Aorta (tissue), 5 donors: ENCODE measurements at regions of chr14 and their contacts with region 1.

Region 1: DNA sequence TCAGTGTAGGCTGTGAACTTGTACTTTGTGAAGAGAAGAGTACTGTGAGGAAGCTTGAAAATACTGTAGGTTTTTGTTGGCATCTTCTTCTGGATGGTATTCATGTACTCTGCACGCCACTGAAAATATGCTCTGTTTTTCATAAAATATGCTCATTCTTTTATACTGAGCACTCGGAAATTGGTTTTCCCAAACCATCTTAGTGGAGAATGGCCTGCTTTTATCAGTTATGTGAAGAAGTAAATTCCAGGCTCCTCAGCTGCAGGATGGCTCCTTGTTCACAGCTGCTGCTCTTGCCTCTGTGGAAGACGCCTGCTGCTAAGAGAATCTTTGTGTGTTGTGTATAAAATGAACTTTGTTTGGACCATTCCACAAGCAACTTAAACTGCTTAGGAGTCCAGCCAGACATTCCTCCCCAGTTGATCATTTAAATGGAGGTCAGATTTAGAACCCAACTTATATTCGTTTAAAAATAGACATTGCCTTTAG is 443.5 kb upstream of the RGS6 start:
- DNase-seq: no peak
- ATAC-seq: no peak
- H3K4me3 ChIP-seq: no peak overlapping the region
- H3K27ac ChIP-seq: peak overlapping the region; percentile 67 to 82
- H3K4me1 ChIP-seq: peaks cover 0 to 9% of the 10 kb centered on the region in 2 donors
- H3K27me3 ChIP-seq: no peaks in the 10 kb centered on the region

Region 2: GRCh38 chr14:71448431-71449252 is 40.1 kb before region 1 on chr14:
- intact Hi-C with region 1: loop called in 1 of 2 experiments (anchors 5 kb)
- DNase-seq: no peak
- ATAC-seq: no peak
- H3K4me3 ChIP-seq: no peak overlapping the region
- H3K27ac ChIP-seq: no peak overlapping the region
- H3K4me1 ChIP-seq: peaks cover 0 to 3% of the 10 kb centered on the region in 2 donors
- H3K27me3 ChIP-seq: no peaks in the 10 kb centered on the region

Region 3: DNA sequence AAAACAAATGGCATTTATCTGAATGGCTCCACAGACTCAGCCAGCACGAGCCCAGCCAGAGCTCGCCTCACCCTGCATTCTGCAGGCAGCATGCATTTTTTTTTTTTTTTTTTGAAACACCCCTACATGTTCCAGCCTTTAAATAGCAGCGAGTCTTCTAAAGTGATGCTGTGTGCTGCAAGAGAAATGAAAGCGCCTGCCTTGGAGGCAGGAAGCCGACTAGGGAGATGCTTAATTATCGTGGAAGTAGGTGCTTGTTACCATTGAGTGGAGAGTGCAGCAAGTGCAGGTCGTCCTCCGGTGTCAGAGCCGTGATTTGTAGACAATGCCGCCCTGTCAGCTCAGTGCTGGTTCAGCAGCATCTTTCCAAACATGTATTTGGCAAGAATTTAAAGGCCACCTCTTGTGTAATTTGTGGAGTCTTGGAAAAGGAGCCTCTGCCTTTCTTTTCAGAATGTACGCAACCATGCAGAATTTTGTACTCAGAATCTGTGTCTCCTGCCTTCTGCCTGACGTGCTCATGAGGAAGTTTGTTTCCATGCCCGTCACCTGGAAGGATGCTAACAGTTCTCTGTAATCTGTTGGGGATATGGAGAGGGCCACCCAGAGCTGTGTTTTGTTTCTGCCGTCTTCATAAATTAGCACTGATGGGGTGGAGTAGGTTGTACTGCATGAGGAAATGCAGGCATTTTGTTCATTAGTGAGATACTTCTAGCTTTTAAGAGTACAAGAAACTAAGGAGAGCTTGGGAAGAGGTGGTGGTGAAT is 97.6 kb after region 1 on chr14:
- intact Hi-C with region 1: loop called in 1 of 2 experiments (anchors 10 kb)
- DNase-seq: peak in 1 of 2 donors; percentile 44
- ATAC-seq: peak; percentile 74
- H3K4me3 ChIP-seq: peak overlapping the region; percentile 38 to 94
- H3K27ac ChIP-seq: peak overlapping the region in 1 of 2 donors; percentile 82
- H3K4me1 ChIP-seq: peaks cover 0 to 2% of the 10 kb centered on the region in 2 donors
- H3K27me3 ChIP-seq: no peaks in the 10 kb centered on the region

Region 4: DNA sequence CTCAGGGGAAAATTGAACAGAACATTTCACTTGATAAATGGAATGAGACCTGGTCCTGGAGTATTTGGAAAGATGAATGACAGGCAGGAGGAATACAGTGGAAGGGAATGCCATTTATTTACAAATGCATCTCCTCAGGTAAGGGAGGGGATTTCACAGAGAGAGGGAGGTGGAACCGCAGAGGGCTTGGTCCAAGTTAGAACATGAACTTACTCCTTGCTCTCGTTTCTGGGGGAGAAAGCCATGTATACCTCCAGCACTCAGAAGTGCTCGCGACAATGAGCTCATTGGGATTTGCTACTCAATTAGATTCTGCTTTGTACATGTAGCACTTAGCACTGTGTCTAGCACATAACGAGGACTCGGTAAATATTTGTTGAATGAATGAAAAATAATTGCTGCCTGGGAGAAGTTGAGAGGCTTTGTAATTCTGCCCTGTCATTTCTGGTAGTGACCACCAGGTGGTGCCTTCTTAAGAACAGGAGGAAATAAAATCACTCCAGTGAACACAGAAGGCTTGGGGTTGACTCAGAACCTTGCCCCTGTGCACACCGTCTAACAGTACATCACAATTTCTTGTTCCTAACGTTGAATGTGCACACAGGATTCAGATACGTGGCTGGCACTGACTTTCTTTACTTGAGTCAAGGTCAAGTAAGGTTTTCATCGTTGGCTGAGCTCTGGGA is 535.1 kb after region 1 on chr14:
- intact Hi-C with region 1: no loop called
- DNase-seq: no peak
- ATAC-seq: no peak
- H3K4me3 ChIP-seq: no peak overlapping the region
- H3K27ac ChIP-seq: no peak overlapping the region
- H3K4me1 ChIP-seq: no peaks in the 10 kb centered on the region
- H3K27me3 ChIP-seq: peaks cover 0 to 3% of the 10 kb centered on the region in 2 donors